Transverse colon (tissue), 4 donors: ENCODE measurements at regions of chr14 and their contacts with region 1.

Region 1: DNA sequence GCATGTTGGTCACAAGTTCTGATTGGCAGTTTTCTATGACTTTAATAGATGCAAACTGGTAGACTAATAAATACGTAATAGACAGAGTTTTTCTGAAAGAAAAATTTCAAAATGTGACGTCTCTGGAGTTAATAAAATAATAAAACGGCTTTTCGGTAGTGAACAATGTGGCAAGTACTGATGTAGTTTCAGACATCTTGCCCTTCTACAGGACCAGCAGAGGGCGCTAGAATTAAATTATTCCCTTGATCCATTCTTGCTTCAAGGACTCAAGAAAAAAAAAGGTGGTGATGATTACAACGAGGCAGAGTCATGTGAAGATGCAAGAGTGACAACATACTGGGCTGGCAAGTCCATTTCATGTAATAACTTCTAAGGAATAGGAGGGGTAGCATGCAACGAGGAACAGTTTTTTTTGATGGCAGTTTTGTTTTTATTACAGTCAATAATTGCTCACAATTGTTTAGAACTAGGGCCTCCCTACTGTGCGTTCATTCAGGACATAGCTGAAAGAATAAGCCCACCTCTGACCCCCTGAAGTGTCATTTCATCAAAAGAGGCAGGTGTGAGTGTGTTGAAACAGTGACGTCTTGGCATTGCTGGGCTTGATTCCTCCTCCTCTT is 101.0 kb upstream of the GZMB start:
- DNase-seq: peak; percentile 33
- H3K4me3 ChIP-seq: no peak overlapping the region
- H3K27ac ChIP-seq: no peak overlapping the region
- H3K4me1 ChIP-seq: no peaks in the 10 kb centered on the region
- H3K27me3 ChIP-seq: no peaks in the 10 kb centered on the region
- CTCF ChIP-seq: peak; percentile 65 to 82 (median 70)
- EP300 ChIP-seq: no peak
- POLR2A ChIP-seq: no peak

Region 2: DNA sequence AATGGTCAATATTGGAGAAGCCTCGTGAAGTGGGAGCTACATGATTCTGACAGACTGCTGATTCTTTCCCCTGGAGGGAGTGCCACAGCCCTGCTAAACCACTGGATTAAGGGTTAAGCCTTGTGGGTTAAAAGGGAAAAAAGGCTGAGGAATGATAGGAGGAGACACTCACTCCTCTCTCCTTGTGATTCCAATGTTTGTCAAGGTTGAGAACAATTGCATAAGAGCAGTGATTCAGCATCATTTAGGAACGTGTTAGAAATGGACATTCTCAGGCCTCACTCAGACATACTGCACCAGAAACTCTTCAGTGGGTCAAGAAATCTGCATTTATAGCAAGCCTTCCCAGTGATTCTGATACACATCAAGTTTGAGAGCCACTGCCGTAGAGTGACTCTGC is 13.2 kb before region 1 on chr14:
- in situ Hi-C with region 1: no loop called
- intact Hi-C with region 1: loop called (anchors 1 kb)
- DNase-seq: no peak
- H3K4me3 ChIP-seq: no peak overlapping the region
- H3K27ac ChIP-seq: no peak overlapping the region
- H3K4me1 ChIP-seq: no peaks in the 10 kb centered on the region
- H3K27me3 ChIP-seq: peaks cover 5% of the 10 kb centered on the region
- CTCF ChIP-seq: no peak
- EP300 ChIP-seq: no peak
- POLR2A ChIP-seq: no peak

Region 3: DNA sequence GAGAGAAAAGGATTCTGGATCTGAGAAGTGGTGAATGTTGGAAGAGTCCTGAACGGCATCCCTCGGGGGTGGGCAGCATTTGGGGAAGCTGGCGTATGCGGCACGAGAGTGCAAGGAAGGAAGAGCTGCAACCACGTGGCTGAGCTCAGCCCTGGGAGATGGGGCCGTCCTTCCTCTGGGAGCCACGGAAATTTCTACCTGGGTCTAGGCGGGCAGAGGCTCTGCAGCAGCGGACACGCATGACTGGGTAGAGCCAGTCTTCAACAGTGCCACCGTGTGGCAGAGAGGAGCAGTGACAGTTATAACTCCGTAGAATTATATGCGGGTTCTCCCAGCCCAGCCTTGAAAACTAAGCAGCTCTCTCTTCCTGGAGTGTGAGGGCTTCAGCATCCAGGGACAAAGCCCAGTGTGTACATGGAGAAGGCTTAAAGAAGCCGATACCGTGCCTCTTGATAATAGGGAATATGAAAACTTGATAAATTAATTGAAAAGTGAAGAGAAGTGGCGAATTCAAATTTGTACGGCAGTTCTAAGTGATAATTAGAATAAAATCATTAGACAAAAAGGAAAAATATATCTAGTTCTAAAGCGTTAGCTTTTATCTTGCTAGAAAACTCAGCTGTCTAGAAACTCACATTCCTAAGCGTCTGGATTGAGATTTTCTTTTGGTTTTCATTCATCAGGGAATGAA is 397.9 kb after region 1 on chr14:
- in situ Hi-C with region 1: loop called in 1 of 4 experiments (anchors 25 kb)
- intact Hi-C with region 1: loop called (anchors 10 kb)
- DNase-seq: peak; percentile 72
- H3K4me3 ChIP-seq: no peak overlapping the region
- H3K27ac ChIP-seq: no peak overlapping the region
- H3K4me1 ChIP-seq: peaks cover 0 to 3% (median 2%) of the 10 kb centered on the region in 4 donors
- H3K27me3 ChIP-seq: peaks cover 7% of the 10 kb centered on the region
- CTCF ChIP-seq: peak; percentile 78 to 87 (median 82)
- EP300 ChIP-seq: no peak
- POLR2A ChIP-seq: no peak

Region 4: DNA sequence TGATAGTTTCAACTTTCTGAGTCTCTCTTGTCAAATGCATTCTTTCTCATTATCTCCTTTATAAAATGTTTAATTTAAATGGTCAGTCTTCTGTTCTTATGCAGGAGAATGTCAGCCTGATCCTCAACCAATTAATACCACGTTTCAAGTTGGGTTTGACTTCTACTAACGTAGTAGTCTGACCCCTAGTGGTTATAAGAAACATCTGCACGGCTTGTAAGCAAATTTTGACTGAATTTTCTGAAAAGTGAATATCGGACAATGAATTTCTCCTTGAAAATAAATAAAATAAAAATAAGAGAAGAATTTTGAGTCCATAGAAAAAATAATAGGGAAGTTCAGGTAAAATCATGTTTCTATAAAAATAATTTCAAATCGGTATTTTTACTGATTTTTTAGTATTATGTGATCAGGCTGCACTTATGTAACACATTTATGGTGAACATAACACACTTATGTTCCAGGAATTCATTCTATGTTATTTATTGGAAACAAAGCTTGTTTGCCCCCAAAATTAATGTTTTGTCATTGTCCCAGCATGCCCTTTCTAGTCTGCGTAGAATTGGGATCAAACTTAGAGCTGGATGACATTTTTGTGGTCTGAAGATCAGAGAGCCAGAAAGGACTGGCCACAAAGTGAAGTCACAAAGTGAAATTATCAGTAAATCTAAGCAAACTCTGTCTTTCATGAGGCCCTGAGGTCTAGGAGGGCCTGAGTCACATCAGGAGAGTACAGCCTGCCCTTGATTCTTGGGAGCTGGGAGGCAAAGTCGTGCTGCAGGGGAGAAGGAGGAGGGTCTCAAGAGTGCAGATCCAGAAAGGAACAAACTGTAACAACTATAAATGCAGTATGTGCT is 416.2 kb after region 1 on chr14:
- in situ Hi-C with region 1: loop called (anchors 10 to 25 kb)
- intact Hi-C with region 1: no loop called
- DNase-seq: no peak
- H3K4me3 ChIP-seq: no peak overlapping the region
- H3K27ac ChIP-seq: no peak overlapping the region
- H3K4me1 ChIP-seq: no peaks in the 10 kb centered on the region
- H3K27me3 ChIP-seq: no peaks in the 10 kb centered on the region
- CTCF ChIP-seq: peak; percentile 71 to 84 (median 80)
- EP300 ChIP-seq: no peak
- POLR2A ChIP-seq: no peak

Region 5: GRCh38 chr14:25400607-25401206 is 665.7 kb after region 1 on chr14:
- in situ Hi-C with region 1: loop called in 3 of 4 experiments (anchors 25 kb)
- intact Hi-C with region 1: no loop called
- DNase-seq: peak; percentile 66
- H3K4me3 ChIP-seq: no peak overlapping the region
- H3K27ac ChIP-seq: no peak overlapping the region
- H3K4me1 ChIP-seq: peaks cover 0 to 8% (median 2%) of the 10 kb centered on the region in 4 donors
- H3K27me3 ChIP-seq: no peaks in the 10 kb centered on the region
- CTCF ChIP-seq: peak; percentile 66 to 84 (median 69)
- EP300 ChIP-seq: no peak
- POLR2A ChIP-seq: no peak